PC-3 (cell line): ENCODE measurements at regions of chr2 and their contacts with region 1.

Region 1: DNA sequence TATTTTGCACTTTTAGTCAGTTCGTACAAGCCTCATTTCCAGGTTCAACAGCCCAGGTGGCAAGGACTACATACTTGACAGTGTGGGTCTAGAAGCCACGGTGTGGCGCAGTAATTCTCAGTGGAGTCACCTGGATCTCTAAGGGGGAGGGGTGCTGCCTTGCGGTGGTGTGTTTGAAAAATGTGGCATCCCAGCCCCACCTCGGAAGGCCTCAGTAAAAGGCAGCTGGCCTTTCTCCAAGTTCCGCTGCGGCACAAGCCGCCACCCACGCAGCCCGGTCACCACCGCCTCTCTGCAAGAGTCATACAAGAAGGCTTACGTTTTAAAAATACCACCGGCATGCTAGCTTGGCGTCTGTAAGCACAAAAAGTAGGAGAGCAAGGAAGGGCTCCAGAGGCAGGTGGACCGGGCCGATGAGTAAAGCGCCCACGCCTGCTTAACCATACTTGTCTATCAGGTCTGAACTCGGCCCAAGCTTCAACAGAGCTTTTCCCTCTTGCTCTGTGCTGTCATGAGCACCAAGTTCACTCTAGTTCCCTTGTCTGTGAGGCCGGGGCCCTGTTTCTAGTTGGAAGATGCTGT is 49.5 kb downstream of the SPRED2 start:
- DNase-seq: peak; percentile 99
- ATAC-seq: peak; percentile 78
- H3K4me3 ChIP-seq: peak overlapping the region; percentile 40; the same call in 1 of the 2 replicates
- H3K27ac ChIP-seq: peak overlapping the region; percentile 94
- H3K4me1 ChIP-seq: peaks cover 76% of the 10 kb centered on the region
- H3K27me3 ChIP-seq: no peaks in the 10 kb centered on the region
- CTCF ChIP-seq: peak; percentile 73

Region 2: DNA sequence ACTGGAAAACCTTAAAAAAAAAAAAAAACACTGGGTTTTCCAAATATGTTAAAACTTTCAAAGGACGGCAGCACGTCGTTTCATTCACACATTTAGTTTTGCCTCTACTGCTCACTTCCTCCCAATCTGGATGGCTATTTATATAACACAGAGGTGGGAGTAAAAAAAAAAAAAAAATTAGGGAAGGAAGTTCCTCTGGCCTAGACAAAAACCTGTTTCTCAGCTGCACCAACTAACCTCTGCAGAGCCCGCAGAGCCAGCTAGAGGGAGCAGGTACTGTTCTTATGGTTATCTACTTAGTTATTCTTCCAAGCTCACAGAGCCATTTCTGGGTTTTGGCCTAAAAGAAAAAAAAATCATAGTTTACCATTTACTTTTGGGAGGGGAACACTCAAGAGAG is 365.5 kb before region 1 on chr2:
- CTCF ChIA-PET with region 1: no interaction called
- POLR2A ChIA-PET with region 1: no interaction called
- intact Hi-C with region 1: no loop called
- DNase-seq: peak; percentile 28
- ATAC-seq: peak; percentile 45; the same call in 1 of the 2 replicates
- H3K4me3 ChIP-seq: no peak overlapping the region
- H3K27ac ChIP-seq: no peak overlapping the region
- H3K4me1 ChIP-seq: no peaks in the 10 kb centered on the region
- H3K27me3 ChIP-seq: no peaks in the 10 kb centered on the region
- CTCF ChIP-seq: peak; percentile 43; the same call in 1 of the 2 replicates

Region 3: GRCh38 chr2:65264821-65265670 is 117.8 kb before region 1 on chr2:
- CTCF ChIA-PET with region 1: no interaction called
- POLR2A ChIA-PET with region 1: no interaction called
- intact Hi-C with region 1: loop called (anchors 5 kb)
- DNase-seq: peak; percentile 74
- ATAC-seq: peak; percentile 70
- H3K4me3 ChIP-seq: no peak overlapping the region
- H3K27ac ChIP-seq: no peak overlapping the region
- H3K4me1 ChIP-seq: peaks cover 19% of the 10 kb centered on the region; the same call in 1 of the 2 replicates
- H3K27me3 ChIP-seq: no peaks in the 10 kb centered on the region
- CTCF ChIP-seq: peak; percentile 88

Region 4: GRCh38 chr2:65366595-65367125 is 16.2 kb before region 1 on chr2:
- CTCF ChIA-PET with region 1: interaction called, 4 read pairs
- POLR2A ChIA-PET with region 1: interaction called, 9 read pairs
- intact Hi-C with region 1: loop called (anchors 1 kb)
- DNase-seq: peak; percentile 99
- ATAC-seq: peak; percentile 77
- H3K4me3 ChIP-seq: peak overlapping the region; percentile 66
- H3K27ac ChIP-seq: peak overlapping the region; percentile 98
- H3K4me1 ChIP-seq: peaks cover 64% of the 10 kb centered on the region
- H3K27me3 ChIP-seq: no peaks in the 10 kb centered on the region
- CTCF ChIP-seq: no peak

Region 5: DNA sequence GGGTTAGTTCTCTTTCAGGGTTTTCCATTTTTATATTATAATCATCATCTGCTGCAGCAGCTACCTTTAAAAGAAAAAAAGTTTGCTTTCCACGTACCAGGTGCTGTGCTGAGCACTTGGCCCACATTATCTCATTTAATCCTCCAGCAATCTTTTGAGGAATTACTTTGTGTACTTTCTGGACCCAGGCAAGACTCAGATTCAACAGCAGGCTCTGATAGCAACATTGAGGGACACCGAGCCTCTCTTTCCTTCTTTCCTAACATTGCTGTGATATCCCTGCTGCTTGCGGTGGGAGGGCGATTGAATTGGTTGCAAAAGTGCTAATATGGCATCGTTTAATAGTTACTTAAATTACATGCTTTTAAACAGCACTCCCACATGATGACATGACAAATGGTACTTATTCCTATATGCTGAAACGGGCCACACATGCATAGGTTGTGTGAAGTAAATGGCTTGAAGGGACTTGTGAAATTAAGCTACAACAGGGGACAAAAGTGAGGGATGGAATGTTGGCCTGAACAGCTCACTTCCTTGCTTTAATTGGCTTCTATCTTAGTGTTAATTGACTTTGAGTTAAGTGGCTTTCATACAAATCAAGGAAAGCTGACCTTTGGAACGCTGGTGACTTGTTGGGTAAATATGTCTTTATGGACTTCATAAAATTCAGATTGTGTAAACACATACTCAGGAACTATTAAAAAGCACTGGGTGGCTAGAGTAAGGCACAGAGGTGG is 28.4 kb after region 1 on chr2:
- CTCF ChIA-PET with region 1: interaction called, 3 read pairs
- POLR2A ChIA-PET with region 1: interaction called, 8 read pairs
- intact Hi-C with region 1: loop called (anchors 1 kb)
- DNase-seq: peak; percentile 77
- ATAC-seq: peak; percentile 83
- H3K4me3 ChIP-seq: peak overlapping the region; percentile 47; the same call in 1 of the 2 replicates
- H3K27ac ChIP-seq: peak overlapping the region; percentile 76
- H3K4me1 ChIP-seq: peaks cover 58% of the 10 kb centered on the region
- H3K27me3 ChIP-seq: no peaks in the 10 kb centered on the region
- CTCF ChIP-seq: no peak

Region 6: GRCh38 chr2:65576861-65577601 is 194.2 kb after region 1 on chr2:
- CTCF ChIA-PET with region 1: no interaction called
- POLR2A ChIA-PET with region 1: no interaction called
- intact Hi-C with region 1: loop called (anchors 1 kb)
- DNase-seq: peak; percentile 96
- ATAC-seq: peak; percentile 92
- H3K4me3 ChIP-seq: peak overlapping the region; percentile 43; the same call in 1 of the 2 replicates
- H3K27ac ChIP-seq: peak overlapping the region; percentile 91
- H3K4me1 ChIP-seq: peaks cover 17% of the 10 kb centered on the region
- H3K27me3 ChIP-seq: no peaks in the 10 kb centered on the region
- CTCF ChIP-seq: no peak